GM10248 (cell line): ENCODE measurements at regions of chr12 and their contacts with region 1.

Region 1: DNA sequence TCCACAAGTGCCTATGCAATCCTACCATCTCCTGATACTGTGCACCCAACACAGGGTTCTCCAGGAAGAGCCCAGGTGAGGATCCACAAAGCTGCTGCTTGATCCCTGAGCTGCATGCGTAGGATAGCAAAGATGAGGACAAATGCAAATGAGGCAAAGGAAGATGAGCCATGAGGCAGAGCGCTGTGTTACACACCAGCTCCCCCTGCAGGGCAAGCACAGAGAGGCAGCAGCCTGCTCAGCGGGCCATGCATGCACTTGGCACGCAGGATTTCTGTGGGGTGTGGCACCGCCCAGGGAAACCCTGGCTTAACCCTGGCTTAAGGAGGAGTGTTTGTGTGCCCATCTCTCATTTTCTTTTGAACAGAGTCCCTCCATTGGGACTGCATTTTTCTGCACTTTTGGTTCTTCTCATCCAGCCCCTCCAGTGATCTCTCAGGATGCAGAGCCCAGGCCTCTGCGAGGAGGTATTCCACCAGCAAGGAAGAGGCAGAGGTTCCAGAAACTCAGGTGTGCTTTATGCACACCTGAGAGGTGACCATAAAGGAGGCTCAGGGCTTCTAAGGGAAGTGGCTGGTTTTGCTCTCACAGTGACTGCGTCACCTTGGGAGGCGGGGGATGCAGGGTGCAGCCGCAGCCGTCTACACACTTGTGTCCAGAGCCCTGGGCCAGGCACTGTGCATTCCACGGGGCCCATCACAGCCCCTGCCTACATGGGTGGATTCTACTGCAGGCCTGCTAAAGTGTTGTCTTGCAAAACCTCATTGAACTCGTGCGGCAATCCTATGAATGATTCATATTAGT is 973.3 kb upstream of the TMEM132C start:
- DNase-seq: no peak
- CTCF ChIP-seq: peak; percentile 39

Region 2: GRCh38 chr12:126843915-126844669 is 449.6 kb before region 1 on chr12:
- CTCF ChIA-PET with region 1: no interaction called
- POLR2A ChIA-PET with region 1: no interaction called
- DNase-seq: no peak
- CTCF ChIP-seq: no peak

Region 3: GRCh38 chr12:127108360-127109215 is 185.1 kb before region 1 on chr12:
- CTCF ChIA-PET with region 1: interaction called, 13 read pairs
- POLR2A ChIA-PET with region 1: no interaction called
- DNase-seq: peak; percentile 28
- CTCF ChIP-seq: peak; percentile 21